ENCODE measurements at regions of chr11 and their contacts with region 1.

Region 1: DNA sequence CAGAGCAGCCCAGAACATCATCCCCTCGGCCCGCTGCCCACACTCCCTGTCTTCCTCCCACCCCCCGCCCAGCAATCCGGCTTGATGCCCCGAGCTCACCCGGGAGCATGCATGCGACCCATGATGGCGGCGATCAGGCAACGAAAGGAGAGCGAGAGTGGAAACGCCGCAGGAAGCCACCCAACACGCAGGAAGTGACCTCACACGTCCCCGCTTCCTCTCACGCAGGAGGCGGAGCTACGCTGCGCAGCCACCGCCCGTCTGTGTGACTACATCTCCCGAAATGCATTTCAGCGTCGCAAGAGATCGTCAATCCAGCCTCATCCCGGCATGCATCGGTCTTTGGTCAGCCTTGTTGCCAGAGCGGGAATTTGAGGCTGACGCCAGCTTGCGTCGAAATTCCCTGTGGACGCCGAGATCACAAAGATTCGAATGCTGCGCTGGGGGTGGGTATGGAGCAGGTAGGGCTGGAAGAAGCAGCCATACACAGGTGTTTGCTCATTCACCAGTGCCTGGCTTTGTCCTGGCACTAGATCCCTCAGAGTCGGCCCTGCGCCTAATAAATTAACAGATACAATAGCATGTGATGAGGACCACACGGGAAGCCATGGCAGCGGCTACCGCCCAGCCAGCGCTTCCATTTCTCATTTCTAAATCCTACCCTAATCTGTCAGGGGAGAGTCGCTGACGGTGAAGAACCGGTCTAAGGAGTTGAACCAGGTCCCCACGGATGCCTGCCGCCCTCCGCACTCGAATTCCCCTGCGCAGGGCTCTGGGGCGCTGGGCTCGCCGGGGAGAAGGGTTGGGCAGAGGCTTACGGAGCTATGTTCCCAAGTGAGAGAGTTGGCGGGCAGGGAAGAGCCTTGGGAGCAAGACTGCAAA is at the start of gene RPS13:
- DNase-seq: peak; percentile 97
- ATAC-seq: peak; percentile 96
- H3K4me3 ChIP-seq: peak within 1 kb of the TSS; percentile 60 to 97 (median 89)
- H3K4me3 Mint-ChIP-seq: peak within 1 kb of the TSS; percentile 89
- H3K27ac ChIP-seq: peak within 1 kb of the TSS; percentile 94
- H3K27ac Mint-ChIP-seq: peak within 1 kb of the TSS; percentile 92
- H3K4me1 ChIP-seq: peaks cover 23 to 26% of the 10 kb centered on the region in 2 donors
- H3K4me1 Mint-ChIP-seq: peaks cover 39% of the 10 kb centered on the region
- H3K27me3 ChIP-seq: no peaks in the 10 kb centered on the region
- H3K27me3 Mint-ChIP-seq: no peaks in the 10 kb centered on the region
- CTCF ChIP-seq: no peak
- total RNA-seq, gene RPS13: 1,295 and 1,411 TPM in 2 replicates

Region 2: GRCh38 chr11:16630651-16631050 is 447.1 kb before region 1 on chr11:
- CTCF ChIA-PET with region 1: no interaction called
- POLR2A ChIA-PET with region 1: no interaction called
- intact Hi-C with region 1: no loop called
- DNase-seq: no peak
- ATAC-seq: no peak
- H3K4me3 ChIP-seq: no peak overlapping the region
- H3K4me3 Mint-ChIP-seq: no peak overlapping the region
- H3K27ac ChIP-seq: no peak overlapping the region
- H3K27ac Mint-ChIP-seq: no peak overlapping the region
- H3K4me1 ChIP-seq: no peaks in the 10 kb centered on the region
- H3K4me1 Mint-ChIP-seq: no peaks in the 10 kb centered on the region
- H3K27me3 ChIP-seq: no peaks in the 10 kb centered on the region
- H3K27me3 Mint-ChIP-seq: peaks cover 15% of the 10 kb centered on the region
- CTCF ChIP-seq: no peak

Region 3: DNA sequence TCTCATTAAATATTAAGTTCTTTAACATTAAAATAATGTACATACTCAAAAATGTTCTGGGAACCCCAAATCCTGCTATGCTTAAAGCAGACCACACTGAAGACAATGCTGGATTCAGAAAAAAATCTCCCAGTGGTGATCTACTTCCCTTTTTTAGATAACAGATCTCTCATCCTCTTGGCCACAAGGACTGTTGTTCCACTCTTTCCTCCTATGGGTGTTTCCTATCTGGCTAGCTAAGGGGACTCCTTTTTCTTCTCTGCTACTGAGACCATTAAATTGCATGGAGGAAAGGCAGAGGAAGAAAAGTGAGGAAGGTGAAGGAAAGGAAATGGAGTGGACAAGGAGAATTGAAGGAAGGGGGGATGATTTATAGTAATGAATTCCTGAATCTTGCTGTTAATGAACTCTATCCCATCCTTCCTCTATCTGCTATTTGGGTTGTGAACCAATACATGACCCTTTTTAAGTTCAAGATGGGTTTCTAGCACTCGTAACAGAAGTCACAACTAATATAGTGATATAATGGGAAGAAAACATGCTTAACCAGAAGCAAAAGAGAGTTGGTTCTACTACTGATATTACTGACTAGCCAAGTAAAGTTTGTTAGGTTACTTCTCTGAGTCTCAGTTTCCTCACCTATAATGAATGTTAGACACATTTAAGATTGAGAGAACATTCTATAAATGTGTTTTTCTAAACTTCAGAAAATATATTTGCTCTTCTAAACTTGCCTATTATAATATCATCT is 76.8 kb after region 1 on chr11:
- CTCF ChIA-PET with region 1: no interaction called
- POLR2A ChIA-PET with region 1: no interaction called
- intact Hi-C with region 1: no loop called
- DNase-seq: no peak
- ATAC-seq: no peak
- H3K4me3 ChIP-seq: no peak overlapping the region
- H3K4me3 Mint-ChIP-seq: no peak overlapping the region
- H3K27ac ChIP-seq: no peak overlapping the region
- H3K27ac Mint-ChIP-seq: no peak overlapping the region
- H3K4me1 ChIP-seq: no peaks in the 10 kb centered on the region
- H3K4me1 Mint-ChIP-seq: peaks cover 8% of the 10 kb centered on the region
- H3K27me3 ChIP-seq: no peaks in the 10 kb centered on the region
- H3K27me3 Mint-ChIP-seq: no peaks in the 10 kb centered on the region
- CTCF ChIP-seq: no peak

Region 4: DNA sequence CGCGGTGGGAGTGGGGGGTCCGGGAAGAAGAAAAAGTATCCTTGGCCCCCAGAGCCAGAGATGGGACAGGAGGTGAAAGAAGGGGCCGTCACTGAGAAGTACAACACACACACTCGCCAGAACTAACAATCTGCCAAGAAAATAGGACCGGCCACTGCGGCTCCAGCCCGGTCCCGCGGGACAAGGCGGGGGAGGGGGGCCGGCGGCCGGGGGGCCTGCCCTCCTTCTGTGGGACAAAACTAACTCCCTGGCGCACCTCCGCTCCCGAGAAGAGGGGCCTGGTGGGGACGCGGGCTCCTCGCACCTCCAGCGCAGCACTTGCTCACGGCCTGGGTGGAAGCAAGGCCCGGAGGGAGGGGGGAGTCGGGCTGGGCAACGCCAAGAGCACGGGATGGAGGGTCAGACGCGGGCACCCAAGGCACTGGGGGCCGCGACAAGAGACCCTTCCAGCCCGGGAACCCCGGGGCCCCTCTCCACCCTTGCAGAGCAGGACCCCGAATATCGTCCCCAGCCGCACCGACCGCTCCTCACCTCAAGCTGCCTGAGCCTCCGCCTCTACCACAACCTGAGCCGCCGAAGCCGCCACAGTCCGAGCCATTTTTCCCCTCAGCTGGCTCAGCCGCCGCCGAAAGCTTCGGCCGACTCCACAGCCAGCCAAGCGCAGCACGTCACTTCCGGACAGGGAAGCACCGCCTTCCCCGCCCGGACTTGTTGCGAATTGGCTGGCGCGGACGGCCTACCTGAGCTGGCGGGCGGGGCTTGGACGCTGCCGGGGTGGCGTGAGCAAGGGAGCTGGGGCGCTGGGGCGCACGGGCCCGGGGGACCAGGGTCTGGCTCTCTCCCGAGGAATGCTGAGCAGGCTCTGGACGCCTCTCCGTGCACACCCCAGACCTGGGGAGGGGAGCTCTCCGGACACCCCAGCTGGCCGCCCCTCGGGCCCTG is 129.8 kb after region 1 on chr11 and contains the start of gene PIK3C2A:
- CTCF ChIA-PET with region 1: interaction called, 4 read pairs
- POLR2A ChIA-PET with region 1: interaction called, 4 read pairs
- intact Hi-C with region 1: loop called (anchors 1 kb)
- DNase-seq: peak; percentile 95
- ATAC-seq: peak; percentile 96
- H3K4me3 ChIP-seq: peak within 1 kb of the TSS; percentile 82 to 99 (median 96)
- H3K4me3 Mint-ChIP-seq: peak within 1 kb of the TSS; percentile 98
- H3K27ac ChIP-seq: peak within 1 kb of the TSS; percentile 96 to 98
- H3K27ac Mint-ChIP-seq: peak within 1 kb of the TSS; percentile 94
- H3K4me1 ChIP-seq: peaks cover 22 to 29% of the 10 kb centered on the region in 2 donors
- H3K4me1 Mint-ChIP-seq: peaks cover 38% of the 10 kb centered on the region
- H3K27me3 ChIP-seq: no peaks in the 10 kb centered on the region
- H3K27me3 Mint-ChIP-seq: no peaks in the 10 kb centered on the region
- CTCF ChIP-seq: no peak
- total RNA-seq, gene PIK3C2A: 48.8 and 54.9 TPM in 2 replicates

Region 5: GRCh38 chr11:17267561-17267960 is 189.8 kb after region 1 on chr11:
- CTCF ChIA-PET with region 1: no interaction called
- POLR2A ChIA-PET with region 1: no interaction called
- intact Hi-C with region 1: no loop called
- DNase-seq: no peak
- ATAC-seq: no peak
- H3K4me3 ChIP-seq: no peak overlapping the region
- H3K4me3 Mint-ChIP-seq: no peak overlapping the region
- H3K27ac ChIP-seq: no peak overlapping the region
- H3K27ac Mint-ChIP-seq: no peak overlapping the region
- H3K4me1 ChIP-seq: no peaks in the 10 kb centered on the region
- H3K4me1 Mint-ChIP-seq: peaks cover 2% of the 10 kb centered on the region
- H3K27me3 ChIP-seq: no peaks in the 10 kb centered on the region
- H3K27me3 Mint-ChIP-seq: peaks cover 10% of the 10 kb centered on the region
- CTCF ChIP-seq: no peak

Region 6: GRCh38 chr11:17354601-17354991 is 276.8 kb after region 1 on chr11:
- CTCF ChIA-PET with region 1: no interaction called
- POLR2A ChIA-PET with region 1: no interaction called
- intact Hi-C with region 1: loop called (anchors 5 kb)
- DNase-seq: peak; percentile 80
- ATAC-seq: no peak
- H3K4me3 ChIP-seq: no peak overlapping the region
- H3K4me3 Mint-ChIP-seq: peak overlapping the region; percentile 95
- H3K27ac ChIP-seq: no peak overlapping the region
- H3K27ac Mint-ChIP-seq: no peak overlapping the region
- H3K4me1 ChIP-seq: peaks cover 29 to 34% of the 10 kb centered on the region in 2 donors
- H3K4me1 Mint-ChIP-seq: peaks cover 32% of the 10 kb centered on the region
- H3K27me3 ChIP-seq: peaks cover 0 to 34% (median 21%) of the 10 kb centered on the region in 4 experiments
- H3K27me3 Mint-ChIP-seq: peaks cover 33% of the 10 kb centered on the region
- CTCF ChIP-seq: peak; percentile 82

Region 7: DNA sequence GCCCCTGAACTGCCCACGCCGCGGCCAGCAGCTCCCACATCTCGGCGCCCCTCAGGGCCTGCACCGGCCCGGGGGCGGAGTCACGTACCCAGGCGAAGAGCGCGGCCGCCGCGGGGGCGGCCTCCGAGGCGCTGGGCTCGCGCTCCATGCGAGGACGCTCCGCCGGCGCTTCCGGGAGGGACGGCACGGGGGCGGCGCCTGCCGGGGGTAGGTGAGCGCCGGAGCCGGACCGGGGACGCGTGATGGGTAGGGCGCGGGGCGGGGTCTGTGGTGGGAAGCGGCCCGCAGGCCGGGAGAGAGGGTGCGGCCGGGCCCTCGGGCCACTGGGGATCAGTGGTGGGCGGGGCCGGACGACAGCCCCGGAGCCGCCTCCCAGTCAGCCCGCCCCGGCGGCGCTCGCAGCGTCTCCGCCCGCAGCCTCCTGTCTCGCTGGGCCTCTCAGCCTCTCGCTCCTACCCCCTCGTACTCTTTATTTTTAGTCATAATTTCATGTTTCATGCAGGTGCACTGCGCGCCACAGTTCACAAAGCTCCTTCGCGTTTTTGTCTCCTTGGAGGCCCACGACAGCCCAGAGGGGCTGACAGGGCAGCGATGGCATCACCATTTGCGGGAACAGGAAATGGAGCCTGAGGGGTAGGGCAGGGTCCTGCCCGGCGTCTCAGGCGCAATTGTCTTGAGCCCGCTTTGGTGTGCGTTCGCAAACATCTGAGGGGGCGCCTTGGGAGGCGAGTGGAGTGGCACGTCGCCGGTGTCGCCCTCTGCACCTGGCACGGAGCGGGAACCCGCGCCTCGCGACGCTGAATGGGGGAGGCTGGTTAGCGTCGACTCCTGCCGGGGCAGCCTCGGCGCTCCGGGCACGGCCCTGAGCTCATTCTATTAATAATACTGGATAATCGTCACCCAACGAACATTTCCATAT is 935.4 kb after region 1 on chr11 and contains the start of gene SERGEF:
- CTCF ChIA-PET with region 1: no interaction called
- POLR2A ChIA-PET with region 1: interaction called, 9 read pairs
- intact Hi-C with region 1: loop called (anchors 2 kb)
- DNase-seq: peak; percentile 95
- ATAC-seq: peak; percentile 90
- H3K4me3 ChIP-seq: peak within 1 kb of the TSS; percentile 77 to 90 (median 83)
- H3K4me3 Mint-ChIP-seq: peak within 1 kb of the TSS; percentile 100
- H3K27ac ChIP-seq: peak within 1 kb of the TSS; percentile 61 to 65
- H3K27ac Mint-ChIP-seq: peak within 1 kb of the TSS; percentile 99
- H3K4me1 ChIP-seq: peaks cover 9 to 21% of the 10 kb centered on the region in 2 donors
- H3K4me1 Mint-ChIP-seq: peaks cover 27% of the 10 kb centered on the region
- H3K27me3 ChIP-seq: no peaks in the 10 kb centered on the region
- H3K27me3 Mint-ChIP-seq: no peaks in the 10 kb centered on the region
- CTCF ChIP-seq: no peak
- total RNA-seq, gene SERGEF: 52.5 and 54.3 TPM in 2 replicates